Left lung (tissue), 14 donors: ENCODE measurements at regions of chr13 and their contacts with region 1.

Region 1: DNA sequence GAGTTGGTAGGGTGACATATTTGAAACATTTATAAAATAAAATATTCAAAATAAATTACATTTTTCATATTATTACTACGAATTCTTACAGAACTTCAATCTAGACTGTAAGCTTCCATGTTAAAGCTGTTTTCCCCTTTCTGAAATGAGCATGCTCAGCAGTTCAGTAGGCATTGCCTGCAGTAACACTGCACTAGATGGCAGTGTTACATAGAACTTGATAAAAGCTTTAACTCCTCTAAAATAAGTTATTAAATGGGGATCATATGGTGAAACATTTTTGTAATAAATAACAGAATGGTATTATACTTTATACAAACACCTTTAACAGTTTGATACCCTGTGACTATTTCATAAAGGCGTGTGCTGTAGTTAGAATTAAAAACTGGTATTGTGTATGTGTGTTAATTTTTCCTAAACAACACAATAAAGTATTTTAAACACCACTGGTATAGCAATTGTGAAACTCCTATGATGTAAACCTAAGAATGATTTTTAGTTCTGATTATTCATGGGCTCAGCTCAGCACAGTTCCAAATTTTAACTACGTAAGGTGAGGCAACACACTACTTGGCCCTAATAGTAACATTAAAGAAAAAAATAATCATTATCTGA is 11.6 kb upstream of the GPR18 start:
- DNase-seq: peak in 1 of 4 donors; percentile 71
- ATAC-seq: peak; percentile 90
- H3K4me3 ChIP-seq: no peak overlapping the region
- H3K27ac ChIP-seq: peak overlapping the region; percentile 16 to 60
- H3K4me1 ChIP-seq: peaks cover 0 to 25% of the 10 kb centered on the region in 2 donors
- H3K27me3 ChIP-seq: no peaks in the 10 kb centered on the region
- CTCF ChIP-seq: peak; percentile 62 to 75

Region 2: DNA sequence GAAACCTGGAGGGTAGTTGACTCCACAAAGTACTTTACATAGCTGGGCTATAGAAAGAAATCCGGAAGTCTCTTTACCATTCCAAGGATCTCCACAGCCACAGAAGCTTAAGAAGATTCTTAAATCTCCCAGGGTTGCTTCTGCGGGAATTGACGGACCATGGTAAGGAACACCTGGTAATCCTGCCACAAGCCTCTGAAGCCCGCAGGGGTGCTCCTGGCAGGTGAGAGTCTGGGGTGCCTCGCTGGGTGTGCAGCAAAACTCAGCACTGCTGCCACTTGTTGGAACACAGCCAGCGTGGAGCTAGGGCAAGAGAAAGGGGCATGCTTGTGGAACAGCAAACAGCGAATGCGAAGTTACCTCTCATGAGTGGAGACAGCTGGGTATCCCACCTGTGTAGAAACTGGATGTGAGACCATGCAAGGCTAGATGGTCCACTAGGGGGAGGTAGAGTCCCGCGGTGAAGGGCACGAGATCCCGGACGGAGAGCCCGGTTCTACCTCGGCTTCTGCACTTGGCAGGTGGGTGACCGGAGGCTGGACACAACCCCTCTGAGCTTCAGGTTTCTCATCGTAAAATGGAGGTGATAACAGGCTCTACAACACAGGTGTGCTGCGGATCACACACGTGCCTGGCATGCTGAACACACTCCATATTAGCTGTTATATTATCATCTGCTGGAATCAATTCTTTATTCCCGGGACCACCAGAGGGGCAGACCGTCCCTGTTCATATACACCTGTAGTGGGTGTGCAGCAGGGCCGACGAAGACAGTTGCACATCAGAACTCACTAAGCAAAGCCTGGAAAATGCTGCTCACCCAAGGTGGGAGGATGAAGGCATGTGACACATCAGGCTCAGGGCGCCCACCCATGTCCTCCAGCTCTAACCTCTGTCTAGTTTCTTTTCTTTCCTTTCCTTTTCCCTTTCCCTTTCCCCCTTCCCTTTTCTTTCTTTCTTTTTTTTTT is 93.1 kb before region 1 on chr13:
- intact Hi-C with region 1: loop called in 1 of 2 experiments (anchors 5 kb)
- DNase-seq: peak; percentile 44 to 83 (median 68)
- ATAC-seq: peak; percentile 99
- H3K4me3 ChIP-seq: no peak overlapping the region
- H3K27ac ChIP-seq: no peak overlapping the region
- H3K4me1 ChIP-seq: peaks cover 0 to 22% of the 10 kb centered on the region in 2 donors
- H3K27me3 ChIP-seq: peaks cover 5 to 55% of the 10 kb centered on the region in 2 donors
- CTCF ChIP-seq: peak; percentile 89 to 95

Region 3: GRCh38 chr13:99436686-99437416 is 167.1 kb after region 1 on chr13:
- intact Hi-C with region 1: loop called in 1 of 2 experiments (anchors 5 kb)
- DNase-seq: peak; percentile 63 to 96 (median 85)
- ATAC-seq: peak; percentile 84
- H3K4me3 ChIP-seq: no peak overlapping the region
- H3K27ac ChIP-seq: no peak overlapping the region
- H3K4me1 ChIP-seq: peaks cover 0 to 37% of the 10 kb centered on the region in 2 donors
- H3K27me3 ChIP-seq: peaks cover 0 to 23% of the 10 kb centered on the region in 2 donors
- CTCF ChIP-seq: peak; percentile 99 to 100